ENCODE measurements at regions of chr3 and their contacts with region 1.

Region 1: DNA sequence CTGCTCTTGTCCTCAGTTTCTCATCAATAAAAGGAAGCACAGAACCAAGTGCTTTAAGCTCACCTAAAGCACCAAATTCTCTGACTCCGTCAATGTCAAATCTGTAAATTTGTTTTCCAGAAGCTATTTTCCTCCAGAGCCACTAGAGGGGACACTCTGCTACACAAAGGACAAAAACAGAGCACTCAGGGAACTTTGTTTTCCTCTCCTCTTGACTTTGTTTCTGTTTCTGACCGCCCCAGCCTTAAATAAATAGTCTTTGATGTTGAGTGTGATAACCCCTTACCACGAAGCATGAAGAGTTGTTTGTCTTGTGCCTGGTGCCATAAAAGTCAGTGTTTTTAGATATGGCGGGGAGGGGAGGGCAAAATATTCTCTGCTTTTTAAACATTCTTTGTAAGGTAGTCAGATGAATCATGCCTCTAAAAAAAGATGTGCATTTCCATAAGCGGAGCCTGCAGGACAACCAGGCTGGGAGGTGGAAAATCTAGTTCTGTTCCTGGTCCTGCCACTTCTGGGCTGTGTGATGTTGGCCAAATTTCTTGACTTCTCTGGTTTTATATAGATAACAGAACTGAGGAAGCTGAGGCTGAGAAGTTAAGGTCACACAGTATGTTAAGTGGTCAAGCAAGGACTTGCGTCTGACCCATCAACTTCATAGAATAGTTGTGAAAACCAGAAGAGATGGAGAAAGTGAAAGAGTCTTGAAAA is 7.3 kb upstream of the ZBTB38 start:
- DNase-seq: no peak
- H3K4me3 Mint-ChIP-seq: no peak overlapping the region
- H3K27ac Mint-ChIP-seq: no peak overlapping the region
- H3K4me1 Mint-ChIP-seq: peaks cover 8% of the 10 kb centered on the region
- H3K27me3 Mint-ChIP-seq: peaks cover 20% of the 10 kb centered on the region

Region 2: GRCh38 chr3:141303481-141304223 is 57.4 kb before region 1 on chr3:
- CTCF ChIA-PET with region 1: interaction called, 48 read pairs
- DNase-seq: peak; percentile 71
- H3K4me3 Mint-ChIP-seq: no peak overlapping the region
- H3K27ac Mint-ChIP-seq: no peak overlapping the region
- H3K4me1 Mint-ChIP-seq: peaks cover 58% of the 10 kb centered on the region
- H3K27me3 Mint-ChIP-seq: peaks cover 3% of the 10 kb centered on the region

Region 3: GRCh38 chr3:141316851-141317250 is 44.2 kb before region 1 on chr3:
- CTCF ChIA-PET with region 1: interaction called, 19 read pairs
- DNase-seq: no peak
- H3K4me3 Mint-ChIP-seq: no peak overlapping the region
- H3K27ac Mint-ChIP-seq: no peak overlapping the region
- H3K4me1 Mint-ChIP-seq: peaks cover 33% of the 10 kb centered on the region
- H3K27me3 Mint-ChIP-seq: no peaks in the 10 kb centered on the region

Region 4: GRCh38 chr3:141386611-141387111 is 25.6 kb after region 1 on chr3:
- CTCF ChIA-PET with region 1: interaction called, 18 read pairs
- DNase-seq: no peak
- H3K4me3 Mint-ChIP-seq: no peak overlapping the region
- H3K27ac Mint-ChIP-seq: no peak overlapping the region
- H3K4me1 Mint-ChIP-seq: peaks cover 10% of the 10 kb centered on the region
- H3K27me3 Mint-ChIP-seq: peaks cover 6% of the 10 kb centered on the region

Region 5: GRCh38 chr3:141452036-141452435 is 91.0 kb after region 1 on chr3:
- CTCF ChIA-PET with region 1: interaction called, 201 read pairs
- DNase-seq: peak; percentile 71
- H3K4me3 Mint-ChIP-seq: no peak overlapping the region
- H3K27ac Mint-ChIP-seq: no peak overlapping the region
- H3K4me1 Mint-ChIP-seq: peaks cover 8% of the 10 kb centered on the region
- H3K27me3 Mint-ChIP-seq: peaks cover 4% of the 10 kb centered on the region

Measured in activated naive CD4-positive, alpha-beta T cell treated with anti-CD3 and anti-CD28 coated beads, Interleukin-2, amount 10 ng/mL, durations not matched to agents 7 days and 5 days (primary cell).